HCT116 (cell line): ENCODE measurements at regions of chr10 and their contacts with region 1.

Region 1: DNA sequence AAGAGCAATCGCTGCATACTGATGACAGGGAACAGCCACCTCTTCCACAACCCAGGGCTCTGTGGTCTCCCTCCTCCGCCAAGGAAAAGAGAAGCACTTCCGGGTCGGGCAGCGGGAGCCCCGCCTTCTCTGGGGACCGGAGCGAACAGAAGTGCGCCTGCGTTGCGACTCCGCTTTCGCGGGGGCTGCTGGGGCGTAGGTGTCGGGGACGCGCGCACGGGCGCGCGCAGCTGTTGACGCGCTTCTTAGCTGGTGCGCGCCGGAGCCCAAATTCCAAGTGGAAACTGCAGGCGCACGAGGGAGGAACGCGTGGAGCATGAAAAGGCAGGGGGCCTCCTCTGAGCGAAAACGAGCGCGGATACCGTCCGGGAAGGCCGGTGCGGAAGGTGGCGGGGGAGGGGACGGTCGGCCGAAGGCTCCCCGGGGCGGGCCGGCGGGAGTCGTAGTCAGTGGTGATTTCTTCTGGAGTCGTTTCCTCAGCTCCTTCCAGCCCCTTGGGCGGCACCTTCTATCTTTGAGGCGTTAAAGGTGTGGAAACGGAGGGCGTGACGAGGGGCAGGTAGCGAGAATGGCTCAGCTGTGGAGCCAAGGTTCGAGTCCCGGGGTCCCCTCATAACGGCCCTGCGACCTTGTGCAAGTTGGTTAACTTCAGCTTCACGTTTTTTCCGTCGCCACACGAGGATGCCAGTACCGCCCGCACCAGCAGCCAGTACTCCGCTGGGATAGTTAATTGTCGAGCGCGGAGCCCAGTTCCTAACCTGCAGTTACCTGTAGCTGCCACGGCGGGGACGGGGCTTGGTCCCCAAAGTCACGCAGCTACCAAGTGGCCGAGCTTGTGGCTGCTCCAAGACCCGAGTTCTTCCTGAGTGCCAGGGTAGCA is at the starts of genes COX15 and CUTC:
- DNase-seq: peak; percentile 97
- ATAC-seq: peak; percentile 88
- H3K4me3 ChIP-seq: peak within 1 kb of the TSS; percentile 80 to 94
- H3K27ac ChIP-seq: peak within 1 kb of the TSS; percentile 99
- H3K4me1 ChIP-seq: peaks cover 15 to 16% of the 10 kb centered on the region in 2 experiments; a peak in 3 of 4 replicates
- H3K27me3 ChIP-seq: no peaks in the 10 kb centered on the region
- CTCF ChIP-seq: peak in 2 of 3 experiments; percentile 60 to 72; a peak in 5 of 6 replicates
- POLR2A ChIP-seq: peak; percentile 95
- RAD21 ChIP-seq: peak; percentile 62
- total RNA-seq, gene COX15: 79.6 TPM
- total RNA-seq, gene CUTC: 53.6 TPM

Region 2: DNA sequence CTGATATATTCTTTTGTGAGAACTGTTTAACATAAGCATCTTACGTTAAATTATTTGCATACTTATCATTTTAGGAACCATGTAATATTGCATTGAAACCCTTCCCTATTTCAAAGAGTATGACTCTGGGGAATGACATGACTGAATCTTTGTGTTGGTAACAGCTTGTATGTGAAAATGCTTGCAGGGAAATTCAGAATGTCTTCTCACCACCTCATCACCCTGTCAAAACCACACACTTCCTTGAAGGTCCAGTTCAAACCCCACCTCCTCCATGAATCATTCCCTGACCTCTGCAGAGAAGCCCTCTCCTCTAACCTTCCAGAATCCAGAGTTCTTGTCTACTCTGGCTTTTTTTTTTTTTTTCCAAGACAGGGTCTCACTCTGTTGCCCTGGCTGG is 225.9 kb before region 1 on chr10:
- CTCF ChIA-PET with region 1: no interaction called
- POLR2A ChIA-PET with region 1: no interaction called
- RAD21 ChIA-PET with region 1: no interaction called
- intact Hi-C with region 1: no loop called
- DNase-seq: no peak
- ATAC-seq: no peak
- H3K4me3 ChIP-seq: no peak overlapping the region
- H3K27ac ChIP-seq: no peak overlapping the region
- H3K4me1 ChIP-seq: no peaks in the 10 kb centered on the region
- H3K27me3 ChIP-seq: peaks cover 20% of the 10 kb centered on the region
- CTCF ChIP-seq: no peak
- POLR2A ChIP-seq: no peak
- RAD21 ChIP-seq: no peak

Region 3: GRCh38 chr10:99742701-99743100 is 10.4 kb after region 1 on chr10:
- CTCF ChIA-PET with region 1: interaction called, 5 read pairs
- POLR2A ChIA-PET with region 1: interaction called, 17 read pairs
- RAD21 ChIA-PET with region 1: interaction called in 1 of 2 experiments, 4 read pairs
- intact Hi-C with region 1: no loop called
- DNase-seq: no peak
- ATAC-seq: no peak
- H3K4me3 ChIP-seq: no peak overlapping the region
- H3K27ac ChIP-seq: peak overlapping the region; percentile 7; the same call in 1 of the 2 replicates
- H3K4me1 ChIP-seq: peaks cover 15 to 30% of the 10 kb centered on the region in 2 experiments
- H3K27me3 ChIP-seq: no peaks in the 10 kb centered on the region
- CTCF ChIP-seq: no peak
- POLR2A ChIP-seq: no peak
- RAD21 ChIP-seq: no peak

Region 4: DNA sequence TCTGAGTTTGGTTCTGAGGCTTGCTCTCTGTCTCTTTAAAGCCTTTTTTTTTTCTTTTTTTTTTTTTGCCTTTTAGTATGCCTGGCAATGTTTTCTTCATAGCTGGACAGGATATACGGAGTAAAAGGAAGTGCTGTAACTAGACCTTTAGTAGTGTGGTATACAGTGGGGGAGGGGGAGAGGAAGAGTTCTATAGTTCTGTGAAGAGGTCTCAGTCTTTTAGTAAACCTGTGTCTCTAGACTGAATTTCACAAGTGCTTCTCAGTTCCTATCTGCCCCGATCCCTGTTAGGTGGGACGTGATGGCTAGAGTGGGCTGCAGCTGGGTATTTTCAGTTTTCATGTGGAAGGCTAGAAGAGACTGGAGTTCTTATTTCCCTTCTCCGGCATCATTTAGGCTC is 47.1 kb after region 1 on chr10:
- CTCF ChIA-PET with region 1: no interaction called
- POLR2A ChIA-PET with region 1: interaction called, 9 read pairs
- RAD21 ChIA-PET with region 1: no interaction called
- intact Hi-C with region 1: loop called (anchors 1 kb)
- DNase-seq: no peak
- ATAC-seq: peak; percentile 35
- H3K4me3 ChIP-seq: peak overlapping the region; percentile 36 to 53
- H3K27ac ChIP-seq: peak overlapping the region; percentile 100
- H3K4me1 ChIP-seq: peaks cover 89 to 97% of the 10 kb centered on the region in 2 experiments
- H3K27me3 ChIP-seq: no peaks in the 10 kb centered on the region
- CTCF ChIP-seq: no peak
- POLR2A ChIP-seq: no peak
- RAD21 ChIP-seq: no peak

Region 5: GRCh38 chr10:100185364-100186252 is 453.3 kb after region 1 on chr10 and contains the start of gene ERLIN1:
- CTCF ChIA-PET with region 1: no interaction called
- POLR2A ChIA-PET with region 1: no interaction called
- RAD21 ChIA-PET with region 1: no interaction called
- intact Hi-C with region 1: loop called (anchors 10 kb)
- DNase-seq: peak; percentile 80
- ATAC-seq: peak; percentile 91
- H3K4me3 ChIP-seq: peak within 1 kb of the TSS; percentile 73 to 82
- H3K27ac ChIP-seq: peak within 1 kb of the TSS; percentile 84
- H3K4me1 ChIP-seq: peaks cover 12 to 23% of the 10 kb centered on the region in 2 experiments; a peak in 3 of 4 replicates
- H3K27me3 ChIP-seq: no peaks in the 10 kb centered on the region
- CTCF ChIP-seq: 0 out of 6 replicates have a peak, but pooled peaks of 1 of the 3 experiments have one; percentile 23
- POLR2A ChIP-seq: peak; percentile 92
- RAD21 ChIP-seq: no peak
- total RNA-seq, gene ERLIN1: 64.5 TPM